Body of pancreas (tissue), 4 donors: ENCODE measurements at regions of chr6 and their contacts with region 1.

Region 1: DNA sequence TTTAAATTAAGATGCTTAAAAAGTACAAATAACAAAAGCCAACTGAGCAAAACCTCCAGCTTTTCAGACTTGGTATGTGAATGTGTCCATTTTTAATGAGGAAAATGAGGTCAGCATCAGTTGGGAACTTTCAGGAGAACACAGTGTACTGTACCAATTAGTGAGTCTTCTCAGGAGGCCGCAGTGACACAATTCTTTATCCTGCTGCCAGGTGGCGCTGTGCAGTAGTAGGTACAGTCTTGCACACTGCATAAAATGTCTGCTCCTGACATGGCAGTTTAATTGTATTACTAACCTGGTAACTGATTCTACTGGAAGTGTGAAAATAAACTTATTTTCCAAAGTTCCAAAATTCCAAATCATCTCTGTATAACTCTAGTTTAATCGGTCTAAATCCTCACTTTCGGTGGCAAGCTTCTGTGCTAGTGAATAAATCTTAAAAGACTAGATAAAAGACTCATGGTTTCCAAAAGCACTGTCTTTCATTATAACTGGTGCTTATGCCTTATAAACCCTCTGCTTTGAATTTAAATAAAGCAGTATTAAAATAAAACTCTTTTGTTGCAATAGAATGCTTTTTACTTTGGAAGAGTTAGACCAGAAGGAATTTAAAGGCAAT is 214.8 kb upstream of the MMS22L start:
- DNase-seq: peak; percentile 71 to 76 (median 72)
- ATAC-seq: peak; percentile 96
- H3K4me3 ChIP-seq: no peak overlapping the region
- H3K27ac ChIP-seq: no peak overlapping the region
- H3K4me1 ChIP-seq: no peaks in the 10 kb centered on the region
- H3K27me3 ChIP-seq: no peaks in the 10 kb centered on the region
- CTCF ChIP-seq: peak; percentile 43 to 79 (median 75)
- POLR2A ChIP-seq: no peak

Region 2: GRCh38 chr6:97427648-97428047 is 70.2 kb before region 1 on chr6:
- intact Hi-C with region 1: no loop called
- DNase-seq: no peak
- ATAC-seq: no peak
- H3K4me3 ChIP-seq: no peak overlapping the region
- H3K27ac ChIP-seq: no peak overlapping the region
- H3K4me1 ChIP-seq: no peaks in the 10 kb centered on the region
- H3K27me3 ChIP-seq: no peaks in the 10 kb centered on the region
- CTCF ChIP-seq: no peak
- POLR2A ChIP-seq: no peak

Region 3: DNA sequence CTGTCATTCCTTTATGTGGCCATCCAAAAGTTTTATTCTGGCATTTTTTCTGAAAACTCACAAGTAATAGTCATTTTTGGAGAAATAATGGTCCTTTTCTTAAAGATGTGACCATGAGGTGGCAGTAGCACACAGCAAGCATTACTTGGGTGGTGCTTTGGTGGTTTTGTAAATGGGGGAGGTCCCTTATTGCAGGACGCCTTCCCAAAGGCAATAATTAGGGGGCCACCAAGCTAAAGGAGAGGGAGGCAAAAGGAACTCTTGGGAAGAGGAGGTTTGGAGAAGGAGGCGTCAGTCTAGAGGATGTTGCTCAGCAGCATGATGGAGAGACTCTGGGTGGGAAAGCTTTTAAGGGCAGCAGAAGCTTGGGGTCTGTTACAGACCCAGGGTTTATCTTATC is 207.7 kb after region 1 on chr6:
- intact Hi-C with region 1: no loop called
- DNase-seq: no peak
- ATAC-seq: no peak
- H3K4me3 ChIP-seq: no peak overlapping the region
- H3K27ac ChIP-seq: no peak overlapping the region
- H3K4me1 ChIP-seq: no peaks in the 10 kb centered on the region
- H3K27me3 ChIP-seq: no peaks in the 10 kb centered on the region
- CTCF ChIP-seq: no peak
- POLR2A ChIP-seq: no peak

Region 4: GRCh38 chr6:98845211-98846020 is 1347.6 kb after region 1 on chr6:
- intact Hi-C with region 1: loop called (anchors 10 kb)
- DNase-seq: peak; percentile 74 to 78 (median 75)
- ATAC-seq: peak; percentile 79
- H3K4me3 ChIP-seq: no peak overlapping the region
- H3K27ac ChIP-seq: no peak overlapping the region
- H3K4me1 ChIP-seq: peaks cover 32% of the 10 kb centered on the region
- H3K27me3 ChIP-seq: peaks cover 0 to 73% of the 10 kb centered on the region in 2 donors
- CTCF ChIP-seq: peak; percentile 73 to 95 (median 80)
- POLR2A ChIP-seq: no peak

Region 5: GRCh38 chr6:99119109-99120031 is 1621.5 kb after region 1 on chr6:
- intact Hi-C with region 1: loop called (anchors 10 kb)
- DNase-seq: peak in 3 of 4 donors; percentile 14 to 18 (median 14)
- ATAC-seq: peak; percentile 58
- H3K4me3 ChIP-seq: no peak overlapping the region
- H3K27ac ChIP-seq: no peak overlapping the region
- H3K4me1 ChIP-seq: no peaks in the 10 kb centered on the region
- H3K27me3 ChIP-seq: no peaks in the 10 kb centered on the region
- CTCF ChIP-seq: peak; percentile 53 to 74 (median 69)
- POLR2A ChIP-seq: no peak